Kidney (tissue), 22 donors: ENCODE measurements at regions of chr6 and their contacts with region 1.

Region 1: DNA sequence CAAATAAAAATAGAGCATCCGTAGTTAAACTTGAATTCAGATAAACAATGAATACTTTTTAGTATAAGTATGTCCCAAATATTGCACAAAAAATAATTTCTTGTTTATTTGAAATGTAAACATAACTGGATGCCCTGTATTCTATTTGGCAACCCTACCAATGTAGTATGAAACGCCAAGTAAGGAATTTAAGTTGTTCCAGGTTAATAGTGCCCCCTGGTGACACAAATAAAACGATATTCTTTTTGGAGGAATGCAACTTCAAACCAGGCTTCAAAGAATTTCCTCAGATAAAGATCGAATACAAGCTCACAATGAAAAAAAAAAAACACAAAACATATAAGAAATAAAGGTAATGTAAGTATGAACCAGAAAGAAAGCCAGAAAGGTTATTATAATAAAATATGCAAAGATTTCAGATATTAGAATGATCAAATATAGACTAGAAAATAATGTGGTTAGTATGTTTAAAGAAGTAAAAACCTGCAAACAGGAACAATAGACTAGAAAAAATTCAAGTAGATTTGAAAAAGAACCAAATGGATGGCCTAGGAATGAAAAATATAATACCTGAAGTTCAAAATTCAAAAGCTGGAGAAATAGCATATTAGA is 18.4 kb upstream of the AKAP7 start:
- DNase-seq: peak in 1 of 5 donors; percentile 37
- H3K4me3 ChIP-seq: no peak overlapping the region
- H3K27ac ChIP-seq: no peak overlapping the region
- H3K4me1 ChIP-seq: no peaks in the 10 kb centered on the region
- H3K27me3 ChIP-seq: no peaks in the 10 kb centered on the region
- CTCF ChIP-seq: peak; percentile 49

Region 2: GRCh38 chr6:130885392-130886192 is 231.3 kb before region 1 on chr6:
- intact Hi-C with region 1: loop called (anchors 5 kb)
- DNase-seq: peak in 4 of 5 donors; percentile 78 to 93 (median 86)
- H3K4me3 ChIP-seq: no peak overlapping the region
- H3K27ac ChIP-seq: no peak overlapping the region
- H3K4me1 ChIP-seq: no peaks in the 10 kb centered on the region
- H3K27me3 ChIP-seq: no peaks in the 10 kb centered on the region
- CTCF ChIP-seq: peak; percentile 97

Region 3: GRCh38 chr6:131001945-131002660 is 114.8 kb before region 1 on chr6:
- intact Hi-C with region 1: no loop called
- DNase-seq: no peak
- H3K4me3 ChIP-seq: no peak overlapping the region
- H3K27ac ChIP-seq: no peak overlapping the region
- H3K4me1 ChIP-seq: peaks cover 0 to 5% (median 0%) of the 10 kb centered on the region in 3 donors
- H3K27me3 ChIP-seq: no peaks in the 10 kb centered on the region
- CTCF ChIP-seq: no peak

Region 4: DNA sequence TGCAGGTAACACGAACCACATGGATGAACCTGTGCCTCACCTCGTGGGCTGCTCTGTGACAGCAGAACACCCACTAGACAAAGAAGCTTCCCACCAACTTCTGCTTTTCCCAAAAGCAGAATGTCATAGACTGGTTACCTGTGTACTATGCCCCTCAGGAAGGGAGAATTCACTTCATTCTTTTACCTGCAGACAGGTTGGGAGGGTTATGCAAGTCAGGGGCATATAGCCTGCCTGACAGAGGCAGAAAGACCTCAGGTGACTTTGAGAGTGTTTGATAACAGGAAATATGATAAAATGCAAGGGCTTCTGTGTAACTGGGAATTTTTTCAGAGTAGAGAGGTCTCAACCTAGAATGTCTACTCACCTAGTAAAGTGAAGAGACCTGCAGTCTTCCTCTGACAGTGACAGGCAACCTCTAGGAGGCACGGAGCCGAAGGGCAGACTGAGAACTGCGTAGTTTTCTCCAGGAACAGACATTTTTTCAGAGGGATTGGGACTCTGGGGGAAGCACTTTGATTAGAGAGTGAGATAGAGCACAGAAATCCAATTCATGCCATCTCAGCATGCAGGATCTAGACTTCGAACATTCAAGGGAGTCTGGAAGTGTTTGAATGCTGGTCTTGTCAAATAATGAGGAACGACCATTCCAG is 231.6 kb after region 1 on chr6:
- intact Hi-C with region 1: no loop called
- DNase-seq: no peak
- H3K4me3 ChIP-seq: no peak overlapping the region
- H3K27ac ChIP-seq: no peak overlapping the region
- H3K4me1 ChIP-seq: no peaks in the 10 kb centered on the region
- H3K27me3 ChIP-seq: no peaks in the 10 kb centered on the region
- CTCF ChIP-seq: no peak